ENCODE measurements at regions of chr4 and their contacts with region 1.

Region 1: DNA sequence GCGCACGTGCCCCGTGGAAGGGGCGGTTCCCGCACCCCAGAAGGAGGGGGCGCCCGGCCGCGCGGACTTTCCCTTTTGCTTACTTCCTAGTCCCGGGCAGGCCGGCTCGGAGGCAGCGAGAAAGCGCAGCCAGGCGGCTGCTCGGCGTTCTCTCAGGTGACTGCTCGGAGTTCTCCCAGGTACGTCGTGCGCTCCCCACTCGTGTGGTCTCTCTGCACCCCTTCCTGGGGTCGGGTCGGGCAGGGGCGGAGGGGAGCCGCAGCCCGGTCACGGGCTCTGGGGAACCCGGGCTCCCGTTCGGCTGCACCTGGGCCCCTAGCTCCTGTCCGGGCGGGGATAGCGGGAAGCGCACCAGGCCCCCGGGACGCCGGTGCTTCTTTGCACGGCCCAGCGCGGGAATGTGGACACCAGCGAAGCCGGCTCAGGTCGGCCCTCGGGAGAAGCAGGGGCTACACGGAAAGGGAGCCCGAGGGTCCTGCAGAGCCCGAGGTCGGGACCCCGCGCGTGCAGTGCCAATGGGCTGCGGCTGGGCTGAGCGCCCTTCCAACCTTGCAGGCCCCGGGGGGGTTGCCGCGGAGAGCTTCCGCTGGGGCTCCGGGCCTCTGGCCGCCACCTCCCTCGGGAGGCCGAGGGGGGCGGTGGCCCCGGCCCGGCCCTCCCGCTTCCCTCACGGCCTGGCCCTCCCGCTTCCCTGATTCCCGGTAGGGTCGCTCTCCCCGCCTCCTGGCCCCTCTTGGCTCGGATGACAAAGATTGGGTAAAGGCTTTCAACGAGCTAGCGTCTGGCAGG is at the start of gene TLR2:
- DNase-seq: peak; percentile 84 to 87 (median 85)
- H3K4me3 ChIP-seq: peak within 1 kb of the TSS; percentile 93 to 98 (median 94)
- H3K4me3 Mint-ChIP-seq: peak within 1 kb of the TSS; percentile 94 to 99
- H3K27ac ChIP-seq: peak within 1 kb of the TSS; percentile 77 to 96
- H3K27ac Mint-ChIP-seq: peak within 1 kb of the TSS; percentile 90 to 97 (median 95)
- H3K4me1 ChIP-seq: peaks cover 29 to 68% of the 10 kb centered on the region in 2 donors
- H3K4me1 Mint-ChIP-seq: peaks cover 43% of the 10 kb centered on the region
- H3K27me3 ChIP-seq: no peaks in the 10 kb centered on the region
- H3K27me3 Mint-ChIP-seq: peaks cover 0 to 4% (median 0%) of the 10 kb centered on the region in 3 donors
- CTCF ChIP-seq: peak; percentile 9
- polyA plus RNA-seq, gene TLR2: 133 to 187 (median 162) TPM

Region 2: DNA sequence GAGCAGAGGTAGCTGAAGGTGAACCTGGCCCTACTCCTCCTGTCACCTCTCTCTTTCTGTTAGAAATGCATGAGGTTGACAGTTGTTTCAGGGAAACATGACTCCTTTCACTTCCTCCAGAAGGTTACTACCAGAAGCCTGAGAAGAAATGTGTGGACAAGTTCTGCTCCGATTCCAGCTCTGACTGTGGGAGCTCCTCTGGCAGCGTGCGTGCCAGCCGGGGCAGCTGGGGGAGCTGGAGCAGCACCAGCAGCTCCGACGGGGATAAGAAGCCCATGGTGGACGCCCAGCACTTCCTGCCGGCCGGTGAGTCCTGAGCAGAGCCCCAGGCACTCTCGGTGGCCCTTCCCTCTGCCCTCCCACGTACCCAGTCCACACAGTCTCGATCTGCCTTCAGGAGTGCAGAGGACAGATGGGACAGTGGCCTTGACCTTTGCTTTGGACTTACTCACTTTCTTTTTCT is 61.6 kb before region 1 on chr4:
- intact Hi-C with region 1: no loop called
- DNase-seq: no peak
- H3K4me3 ChIP-seq: no peak overlapping the region
- H3K4me3 Mint-ChIP-seq: peak overlapping the region in 1 of 2 donors; percentile 52
- H3K27ac ChIP-seq: peak overlapping the region in 1 of 2 donors; percentile 75
- H3K27ac Mint-ChIP-seq: peak overlapping the region; percentile 48 to 87 (median 79)
- H3K4me1 ChIP-seq: peaks cover 26 to 29% of the 10 kb centered on the region in 2 donors
- H3K4me1 Mint-ChIP-seq: peaks cover 45% of the 10 kb centered on the region
- H3K27me3 ChIP-seq: no peaks in the 10 kb centered on the region
- H3K27me3 Mint-ChIP-seq: no peaks in the 10 kb centered on the region
- CTCF ChIP-seq: no peak

Region 3: DNA sequence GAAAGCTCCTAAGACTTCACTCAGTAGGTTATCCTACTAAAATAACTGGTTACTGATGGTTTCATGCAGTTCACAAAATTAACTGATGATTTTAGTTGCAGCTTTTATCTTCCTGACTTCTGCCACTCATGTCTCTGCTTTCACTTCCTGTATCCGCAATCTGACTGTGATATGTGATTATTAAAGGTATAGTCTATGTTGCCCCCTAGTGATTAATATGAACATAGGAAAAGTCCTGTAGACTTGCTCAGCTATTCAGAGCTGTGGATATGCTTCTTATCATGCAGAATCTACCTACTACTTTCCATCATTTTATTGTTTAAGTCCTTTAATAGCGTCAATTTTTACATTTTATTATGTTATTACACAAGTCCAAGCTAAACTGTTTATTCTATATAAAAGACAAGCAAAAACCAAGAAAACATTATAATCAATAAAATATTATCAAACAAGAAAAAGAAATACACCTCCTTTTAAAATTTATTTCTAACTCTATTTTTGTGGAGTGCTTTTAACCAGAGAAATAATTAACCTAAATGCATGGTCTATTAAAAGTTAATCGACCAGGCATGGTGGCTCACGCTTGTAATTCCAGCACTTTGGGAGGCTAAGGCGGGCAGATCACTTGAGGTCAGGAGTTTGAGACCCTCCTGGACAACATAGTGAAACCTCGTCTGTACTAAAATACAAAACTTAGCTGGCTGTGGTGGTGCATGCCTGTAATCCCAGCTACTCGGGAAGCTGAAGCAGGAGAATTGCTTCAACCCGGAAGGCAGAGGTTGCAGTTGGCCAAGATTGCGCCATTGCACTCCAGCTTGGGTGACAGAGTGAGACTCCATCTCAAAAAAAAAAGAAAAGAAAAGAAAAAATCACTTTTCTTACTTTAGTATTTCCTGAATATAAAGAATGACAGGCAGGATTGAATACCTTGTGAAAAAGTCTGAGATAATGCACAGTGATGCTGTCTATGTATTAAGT is 40.7 kb before region 1 on chr4:
- intact Hi-C with region 1: loop called (anchors 5 kb)
- DNase-seq: peak; percentile 61 to 86 (median 81)
- H3K4me3 ChIP-seq: peak overlapping the region in 1 of 3 experiments; percentile 19
- H3K4me3 Mint-ChIP-seq: no peak overlapping the region
- H3K27ac ChIP-seq: peak overlapping the region; percentile 29 to 71
- H3K27ac Mint-ChIP-seq: peak overlapping the region; percentile 50 to 90 (median 73)
- H3K4me1 ChIP-seq: peaks cover 54 to 76% of the 10 kb centered on the region in 2 donors
- H3K4me1 Mint-ChIP-seq: peaks cover 74% of the 10 kb centered on the region
- H3K27me3 ChIP-seq: no peaks in the 10 kb centered on the region
- H3K27me3 Mint-ChIP-seq: peaks cover 0 to 2% (median 2%) of the 10 kb centered on the region in 3 donors
- CTCF ChIP-seq: peak; percentile 53

Region 4: GRCh38 chr4:154781126-154781982 is 1097.0 kb after region 1 on chr4 and contains the start of gene RBM46:
- intact Hi-C with region 1: no loop called
- DNase-seq: no peak
- H3K4me3 ChIP-seq: no peak within 1 kb of the TSS
- H3K4me3 Mint-ChIP-seq: peak within 1 kb of the TSS in 1 of 2 donors; percentile 30
- H3K27ac ChIP-seq: no peak within 1 kb of the TSS
- H3K27ac Mint-ChIP-seq: no peak within 1 kb of the TSS
- H3K4me1 ChIP-seq: no peaks in the 10 kb centered on the region
- H3K4me1 Mint-ChIP-seq: no peaks in the 10 kb centered on the region
- H3K27me3 ChIP-seq: no peaks in the 10 kb centered on the region
- H3K27me3 Mint-ChIP-seq: peaks cover 7 to 20% (median 16%) of the 10 kb centered on the region in 3 donors
- CTCF ChIP-seq: no peak
- polyA plus RNA-seq, gene RBM46: 0.04 TPM in 1 of 3 donors, not detected in the others

Measured in CD14-positive monocyte (primary cell).